ENCODE measurements at regions of chr12 and their contacts with region 1.

Region 1: DNA sequence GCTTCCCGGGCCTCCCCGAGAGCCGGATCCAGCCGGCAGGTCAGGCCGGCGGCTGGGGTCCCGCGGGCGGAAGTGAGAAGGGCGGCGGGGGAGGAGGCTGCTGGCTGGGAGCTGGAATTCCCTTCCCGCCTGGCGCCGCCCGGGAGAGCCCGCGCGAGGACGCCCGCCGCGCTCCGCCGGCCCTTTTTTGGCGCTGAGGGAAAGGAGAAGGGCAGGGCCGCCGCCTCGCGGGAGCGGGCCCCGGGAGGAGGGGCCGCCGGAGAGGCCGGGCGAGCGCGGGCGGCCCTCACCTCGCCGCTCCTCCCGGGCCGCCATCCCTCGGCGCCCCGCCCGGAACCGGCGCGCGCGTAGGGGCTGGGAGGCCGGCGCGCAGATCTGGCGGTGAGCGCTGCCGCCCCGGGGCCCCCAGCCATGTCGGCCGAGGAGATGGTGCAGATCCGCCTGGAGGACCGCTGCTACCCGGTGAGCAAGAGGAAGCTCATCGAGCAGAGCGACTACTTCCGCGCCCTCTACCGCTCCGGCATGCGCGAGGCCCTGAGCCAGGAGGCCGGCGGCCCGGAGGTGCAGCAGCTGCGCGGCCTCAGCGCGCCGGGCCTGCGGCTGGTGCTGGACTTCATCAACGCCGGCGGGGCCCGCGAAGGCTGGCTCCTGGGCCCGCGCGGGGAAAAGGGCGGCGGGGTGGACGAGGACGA is at the starts of genes KLHL42 and MANSC4:
- DNase-seq: peak; percentile 52 to 73 (median 70)
- ATAC-seq: peak; percentile 90
- H3K4me3 ChIP-seq: peak within 1 kb of the TSS; percentile 81
- H3K4me3 Mint-ChIP-seq: peak within 1 kb of the TSS; percentile 84 to 94 (median 91)
- H3K27ac ChIP-seq: peak within 1 kb of the TSS; percentile 76
- H3K27ac Mint-ChIP-seq: peak within 1 kb of the TSS; percentile 74 to 94 (median 88)
- H3K4me1 ChIP-seq: peaks cover 5 to 12% of the 10 kb centered on the region in 2 donors
- H3K4me1 Mint-ChIP-seq: peaks cover 18 to 43% (median 38%) of the 10 kb centered on the region in 7 donors
- H3K27me3 ChIP-seq: no peaks in the 10 kb centered on the region
- H3K27me3 Mint-ChIP-seq: peaks cover 0 to 18% (median 0%) of the 10 kb centered on the region in 5 donors
- total RNA-seq, gene KLHL42: 16.0 to 27.0 (median 18.4) TPM
- total RNA-seq, gene MANSC4: 0.64 TPM in 1 of 5 experiments, not detected in the others

Region 2: DNA sequence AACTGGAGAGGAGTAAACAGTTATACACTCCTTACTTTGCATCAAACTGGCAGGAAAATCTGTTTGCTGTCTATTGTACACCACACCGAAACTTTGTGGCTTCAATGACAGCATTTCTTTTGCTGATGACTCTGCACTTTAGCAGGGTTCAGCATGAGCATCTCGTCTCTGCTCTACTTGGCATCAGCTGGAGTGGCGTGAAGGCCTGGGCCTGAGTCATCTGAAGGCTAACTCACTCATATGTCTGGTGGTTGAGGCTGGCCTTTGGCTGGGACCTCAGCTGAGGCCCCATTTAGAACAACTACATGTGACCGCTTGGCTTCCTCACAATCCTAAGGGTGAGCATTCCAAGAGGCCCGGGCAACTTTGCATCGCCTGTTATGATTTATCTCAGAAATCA is 112.5 kb before region 1 on chr12:
- CTCF ChIA-PET with region 1: no interaction called
- POLR2A ChIA-PET with region 1: no interaction called
- intact Hi-C with region 1: no loop called
- DNase-seq: no peak
- ATAC-seq: no peak
- H3K4me3 ChIP-seq: no peak overlapping the region
- H3K4me3 Mint-ChIP-seq: no peak overlapping the region
- H3K27ac ChIP-seq: no peak overlapping the region
- H3K27ac Mint-ChIP-seq: no peak overlapping the region
- H3K4me1 ChIP-seq: no peaks in the 10 kb centered on the region
- H3K4me1 Mint-ChIP-seq: peaks cover 0 to 8% (median 0%) of the 10 kb centered on the region in 7 donors
- H3K27me3 ChIP-seq: no peaks in the 10 kb centered on the region
- H3K27me3 Mint-ChIP-seq: no peaks in the 10 kb centered on the region

Region 3: DNA sequence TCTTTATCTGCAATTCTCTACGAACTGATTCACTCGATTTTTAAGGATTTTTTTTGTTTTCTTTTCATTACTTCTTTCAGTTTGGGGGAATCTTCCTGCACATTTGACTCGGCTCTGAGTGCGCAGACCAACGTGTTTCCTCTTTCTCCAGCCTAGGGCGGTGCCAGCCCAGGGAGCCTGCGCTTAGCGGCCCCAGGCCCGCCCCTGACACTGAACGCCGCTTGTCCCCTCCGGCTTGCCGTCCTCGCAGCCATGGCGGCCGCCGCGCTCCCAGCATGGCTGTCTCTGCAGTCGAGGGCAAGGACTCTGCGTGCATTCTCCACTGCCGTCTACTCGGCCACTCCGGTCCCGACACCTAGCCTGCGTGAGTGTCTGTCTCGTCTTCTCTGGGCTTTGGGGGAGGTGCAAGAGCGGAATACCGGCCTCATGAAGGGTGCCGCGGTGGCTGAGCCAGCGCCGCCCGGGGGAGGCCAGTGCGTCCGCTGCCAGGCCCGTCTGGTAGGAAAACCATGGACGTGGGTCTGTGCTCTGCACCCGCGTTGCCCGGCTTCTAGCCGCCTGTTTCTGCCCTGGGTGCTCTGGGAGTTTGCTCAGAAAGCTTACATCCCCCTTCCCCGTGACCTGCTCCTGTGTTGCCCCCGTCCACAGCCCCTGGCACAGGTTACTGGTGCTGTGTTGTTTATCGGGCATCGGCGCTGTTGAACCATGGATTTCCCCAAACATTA is 69.3 kb before region 1 on chr12 and contains the start of gene MRPS35:
- CTCF ChIA-PET with region 1: no interaction called
- POLR2A ChIA-PET with region 1: no interaction called
- intact Hi-C with region 1: loop called (anchors 1 kb)
- DNase-seq: peak; percentile 86 to 94 (median 92)
- ATAC-seq: peak; percentile 100
- H3K4me3 ChIP-seq: peak within 1 kb of the TSS; percentile 98
- H3K4me3 Mint-ChIP-seq: peak within 1 kb of the TSS; percentile 94 to 100 (median 98)
- H3K27ac ChIP-seq: peak within 1 kb of the TSS; percentile 85
- H3K27ac Mint-ChIP-seq: peak within 1 kb of the TSS; percentile 91 to 100 (median 98)
- H3K4me1 ChIP-seq: peaks cover 7 to 13% of the 10 kb centered on the region in 2 donors
- H3K4me1 Mint-ChIP-seq: peaks cover 21 to 46% (median 39%) of the 10 kb centered on the region in 7 donors
- H3K27me3 ChIP-seq: no peaks in the 10 kb centered on the region
- H3K27me3 Mint-ChIP-seq: peaks cover 0 to 18% (median 0%) of the 10 kb centered on the region in 5 donors
- total RNA-seq, gene MRPS35: 19.9 to 35.7 (median 23.5) TPM

Region 4: DNA sequence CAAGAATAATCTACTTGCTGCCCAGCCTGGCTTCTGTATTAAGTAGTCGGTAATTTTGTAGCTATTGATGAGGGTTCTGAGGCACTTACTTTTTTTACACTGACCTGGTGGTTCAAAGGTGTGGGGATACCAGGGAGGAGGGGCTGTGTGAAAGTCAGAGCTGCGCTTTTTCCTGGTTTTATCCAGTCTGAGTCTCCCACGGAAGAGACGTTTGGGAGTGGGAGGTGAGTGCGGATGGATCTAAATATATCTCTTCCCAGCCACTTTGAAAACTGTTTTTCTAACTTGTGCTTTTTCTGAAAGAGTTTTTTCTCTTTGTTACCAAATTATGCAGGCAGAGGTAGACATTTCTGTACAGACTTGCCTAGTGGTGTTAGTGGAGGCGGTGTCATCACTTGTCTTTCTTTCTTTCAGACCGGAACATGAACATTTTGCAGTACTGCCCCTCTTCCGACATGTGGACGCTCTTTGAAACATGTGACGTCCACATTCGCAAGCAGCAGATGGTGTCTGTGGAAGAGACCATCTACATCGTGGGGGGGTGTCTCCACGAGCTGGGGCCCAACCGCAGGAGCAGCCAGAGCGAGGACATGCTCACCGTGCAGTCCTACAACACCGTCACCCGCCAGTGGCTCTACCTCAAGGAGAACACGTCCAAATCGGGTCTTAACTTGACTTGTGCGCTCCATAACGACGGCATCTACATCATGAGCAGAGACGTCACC is 17.4 kb after region 1 on chr12:
- CTCF ChIA-PET with region 1: no interaction called
- POLR2A ChIA-PET with region 1: interaction called, 17 read pairs
- intact Hi-C with region 1: loop called in 1 of 2 experiments (anchors 1 kb)
- DNase-seq: no peak
- ATAC-seq: no peak
- H3K4me3 ChIP-seq: no peak overlapping the region
- H3K4me3 Mint-ChIP-seq: no peak overlapping the region
- H3K27ac ChIP-seq: no peak overlapping the region
- H3K27ac Mint-ChIP-seq: peak overlapping the region in 4 of 9 donors; percentile 16 to 50 (median 30)
- H3K4me1 ChIP-seq: peaks cover 0 to 11% of the 10 kb centered on the region in 2 donors
- H3K4me1 Mint-ChIP-seq: peaks cover 8 to 41% (median 26%) of the 10 kb centered on the region in 7 donors
- H3K27me3 ChIP-seq: no peaks in the 10 kb centered on the region
- H3K27me3 Mint-ChIP-seq: no peaks in the 10 kb centered on the region

Region 5: GRCh38 chr12:27821259-27821973 is 41.4 kb after region 1 on chr12:
- CTCF ChIA-PET with region 1: interaction called, 5 read pairs
- POLR2A ChIA-PET with region 1: interaction called, 13 read pairs
- intact Hi-C with region 1: loop called (anchors 1 kb)
- DNase-seq: peak in 7 of 9 donors; percentile 21 to 52 (median 42)
- ATAC-seq: peak; percentile 56
- H3K4me3 ChIP-seq: no peak overlapping the region
- H3K4me3 Mint-ChIP-seq: peak overlapping the region in 7 of 10 donors; percentile 31 to 70 (median 54)
- H3K27ac ChIP-seq: no peak overlapping the region
- H3K27ac Mint-ChIP-seq: peak overlapping the region in 5 of 9 donors; percentile 8 to 88 (median 57)
- H3K4me1 ChIP-seq: peaks cover 0 to 8% of the 10 kb centered on the region in 2 donors
- H3K4me1 Mint-ChIP-seq: peaks cover 0 to 34% (median 13%) of the 10 kb centered on the region in 7 donors
- H3K27me3 ChIP-seq: no peaks in the 10 kb centered on the region
- H3K27me3 Mint-ChIP-seq: peaks cover 0 to 52% (median 4%) of the 10 kb centered on the region in 5 donors